ENCODE measurements at regions of chr12 and their contacts with region 1.

Region 1: GRCh38 chr12:57549909-57550640 is at the start of gene KIF5A:
- DNase-seq: no peak
- H3K4me3 ChIP-seq: peak within 1 kb of the TSS; percentile 54 to 65 (median 56)
- H3K27ac ChIP-seq: peak within 1 kb of the TSS in 2 of 4 donors; percentile 16 to 45
- H3K4me1 ChIP-seq: peaks cover 28 to 34% (median 32%) of the 10 kb centered on the region in 4 donors
- H3K27me3 ChIP-seq: peaks cover 0 to 27% (median 3%) of the 10 kb centered on the region in 4 donors
- CTCF ChIP-seq: peak in 2 of 3 experiments; percentile 4 to 13
- EP300 ChIP-seq: no peak
- POLR2A ChIP-seq: no peak
- total RNA-seq, gene KIF5A: 2.1 to 3.2 (median 2.4) TPM

Region 2: GRCh38 chr12:57461276-57461916 is 88.7 kb before region 1 on chr12:
- intact Hi-C with region 1: loop called (anchors 2 kb)
- DNase-seq: no peak
- H3K4me3 ChIP-seq: peak overlapping the region; percentile 64 to 79 (median 66)
- H3K27ac ChIP-seq: peak overlapping the region; percentile 80 to 85 (median 82)
- H3K4me1 ChIP-seq: peaks cover 23 to 44% (median 40%) of the 10 kb centered on the region in 4 donors
- H3K27me3 ChIP-seq: peaks cover 0 to 13% (median 4%) of the 10 kb centered on the region in 4 donors
- CTCF ChIP-seq: no peak
- EP300 ChIP-seq: no peak
- POLR2A ChIP-seq: no peak

Measured in esophagus muscularis mucosa (tissue), 4 donors.